ENCODE measurements at regions of chr14 and their contacts with region 1.

Region 1: GRCh38 chr14:70907176-70907995 is at the start of gene PCNX1:
- DNase-seq: peak; percentile 93
- H3K4me3 Mint-ChIP-seq: peak within 1 kb of the TSS; percentile 95
- H3K27ac Mint-ChIP-seq: peak within 1 kb of the TSS; percentile 94
- H3K4me1 Mint-ChIP-seq: peaks cover 41% of the 10 kb centered on the region
- H3K27me3 Mint-ChIP-seq: no peaks in the 10 kb centered on the region

Region 2: GRCh38 chr14:70816525-70816924 is 90.9 kb before region 1 on chr14:
- CTCF ChIA-PET with region 1: interaction called, 27 read pairs
- DNase-seq: no peak
- H3K4me3 Mint-ChIP-seq: no peak overlapping the region
- H3K27ac Mint-ChIP-seq: no peak overlapping the region
- H3K4me1 Mint-ChIP-seq: peaks cover 15% of the 10 kb centered on the region
- H3K27me3 Mint-ChIP-seq: peaks cover 24% of the 10 kb centered on the region

Region 3: DNA sequence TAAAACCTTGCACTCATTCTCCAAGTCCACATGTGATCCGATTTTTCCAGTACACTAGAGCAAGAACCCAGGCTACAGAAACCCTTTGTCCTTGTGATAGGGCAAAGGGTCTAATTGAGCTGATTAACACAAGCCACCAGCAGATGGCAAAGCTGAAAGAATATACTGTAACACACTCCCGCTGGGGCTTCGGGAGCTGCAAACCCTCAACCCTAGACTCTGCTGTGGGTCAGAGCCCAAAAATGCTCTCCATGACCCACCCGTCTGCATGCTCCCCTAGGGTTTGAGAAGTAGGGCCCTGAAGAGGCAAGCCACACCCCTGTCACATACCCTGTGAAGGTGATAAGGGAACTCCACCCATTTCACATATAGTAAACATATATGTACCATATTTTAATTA is 33.8 kb before region 1 on chr14:
- CTCF ChIA-PET with region 1: interaction called, 11 read pairs
- DNase-seq: peak; percentile 36
- H3K4me3 Mint-ChIP-seq: no peak overlapping the region
- H3K27ac Mint-ChIP-seq: no peak overlapping the region
- H3K4me1 Mint-ChIP-seq: peaks cover 23% of the 10 kb centered on the region
- H3K27me3 Mint-ChIP-seq: no peaks in the 10 kb centered on the region

Region 4: DNA sequence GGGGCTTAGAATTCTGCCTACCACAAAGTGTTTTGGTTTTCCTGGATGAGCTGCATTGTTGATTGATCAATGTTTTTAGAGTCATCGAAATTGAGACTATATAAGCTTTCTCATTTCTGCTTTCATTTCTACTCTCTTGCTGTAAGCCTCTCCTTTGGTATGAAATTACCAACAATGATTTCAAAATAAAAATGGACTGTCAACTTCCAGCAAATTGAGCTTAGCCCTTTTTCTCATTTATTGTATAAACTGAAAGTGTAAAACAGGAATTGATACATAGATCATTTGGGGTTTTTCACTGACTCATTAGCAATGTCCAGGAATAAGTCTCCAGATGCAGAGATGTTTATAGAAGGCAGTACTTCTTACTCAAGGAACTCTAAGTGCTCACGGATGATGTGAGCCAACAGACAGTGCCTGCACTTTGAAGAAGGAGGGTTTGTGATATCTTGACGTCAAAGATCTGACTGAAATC is 20.1 kb before region 1 on chr14:
- CTCF ChIA-PET with region 1: interaction called, 128 read pairs
- DNase-seq: no peak
- H3K4me3 Mint-ChIP-seq: peak overlapping the region; percentile 65
- H3K27ac Mint-ChIP-seq: peak overlapping the region; percentile 95
- H3K4me1 Mint-ChIP-seq: peaks cover 94% of the 10 kb centered on the region
- H3K27me3 Mint-ChIP-seq: no peaks in the 10 kb centered on the region

Region 5: GRCh38 chr14:70934502-70935134 is 27.2 kb after region 1 on chr14:
- CTCF ChIA-PET with region 1: interaction called, 16 read pairs
- DNase-seq: no peak
- H3K4me3 Mint-ChIP-seq: peak overlapping the region; percentile 29
- H3K27ac Mint-ChIP-seq: peak overlapping the region; percentile 85
- H3K4me1 Mint-ChIP-seq: peaks cover 58% of the 10 kb centered on the region
- H3K27me3 Mint-ChIP-seq: no peaks in the 10 kb centered on the region

Region 6: GRCh38 chr14:70955543-70956480 is 48.4 kb after region 1 on chr14:
- CTCF ChIA-PET with region 1: interaction called, 64 read pairs
- DNase-seq: peak; percentile 65
- H3K4me3 Mint-ChIP-seq: no peak overlapping the region
- H3K27ac Mint-ChIP-seq: no peak overlapping the region
- H3K4me1 Mint-ChIP-seq: peaks cover 25% of the 10 kb centered on the region
- H3K27me3 Mint-ChIP-seq: no peaks in the 10 kb centered on the region

Region 7: GRCh38 chr14:70972107-70972976 is 65.0 kb after region 1 on chr14:
- CTCF ChIA-PET with region 1: interaction called, 14 read pairs
- DNase-seq: peak; percentile 90
- H3K4me3 Mint-ChIP-seq: no peak overlapping the region
- H3K27ac Mint-ChIP-seq: no peak overlapping the region
- H3K4me1 Mint-ChIP-seq: peaks cover 23% of the 10 kb centered on the region
- H3K27me3 Mint-ChIP-seq: no peaks in the 10 kb centered on the region